PC-3 (cell line): ENCODE measurements at regions of chr7 and their contacts with region 1.

Region 1: DNA sequence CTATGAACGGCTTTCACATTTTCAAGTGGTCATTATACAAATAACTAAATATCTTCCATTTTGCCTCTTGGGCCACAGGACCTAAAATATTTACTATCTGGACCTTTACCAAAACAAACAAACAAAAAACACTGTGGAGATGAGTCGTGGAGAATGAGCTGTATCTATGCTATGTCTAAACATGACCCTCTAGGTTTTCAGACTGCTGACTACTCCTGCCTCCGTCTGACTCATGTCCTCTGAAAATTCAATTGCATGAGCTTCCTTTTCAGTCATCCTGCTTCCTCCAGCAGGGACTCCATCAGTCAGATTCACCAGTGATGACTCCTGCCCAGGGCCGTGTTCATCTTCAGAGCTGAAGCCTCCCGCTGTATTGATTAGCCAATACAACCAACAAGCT is 96.8 kb downstream of the COL28A1 start:
- DNase-seq: peak; percentile 97
- ATAC-seq: peak; percentile 99
- H3K4me3 ChIP-seq: no peak overlapping the region
- H3K27ac ChIP-seq: peak overlapping the region; percentile 74
- H3K4me1 ChIP-seq: peaks cover 38% of the 10 kb centered on the region
- H3K27me3 ChIP-seq: no peaks in the 10 kb centered on the region
- CTCF ChIP-seq: no peak

Region 2: GRCh38 chr7:7452119-7452518 is 13.3 kb after region 1 on chr7:
- CTCF ChIA-PET with region 1: no interaction called
- POLR2A ChIA-PET with region 1: interaction called, 5 read pairs
- intact Hi-C with region 1: loop called (anchors 1 kb)
- DNase-seq: no peak
- ATAC-seq: no peak
- H3K4me3 ChIP-seq: no peak overlapping the region
- H3K27ac ChIP-seq: no peak overlapping the region
- H3K4me1 ChIP-seq: peaks cover 14% of the 10 kb centered on the region
- H3K27me3 ChIP-seq: no peaks in the 10 kb centered on the region
- CTCF ChIP-seq: no peak

Region 3: GRCh38 chr7:7489546-7489945 is 50.7 kb after region 1 on chr7:
- CTCF ChIA-PET with region 1: no interaction called
- POLR2A ChIA-PET with region 1: no interaction called
- intact Hi-C with region 1: loop called (anchors 2 kb)
- DNase-seq: peak; percentile 33
- ATAC-seq: no peak
- H3K4me3 ChIP-seq: no peak overlapping the region
- H3K27ac ChIP-seq: no peak overlapping the region
- H3K4me1 ChIP-seq: peaks cover 25% of the 10 kb centered on the region
- H3K27me3 ChIP-seq: no peaks in the 10 kb centered on the region
- CTCF ChIP-seq: no peak

Region 4: DNA sequence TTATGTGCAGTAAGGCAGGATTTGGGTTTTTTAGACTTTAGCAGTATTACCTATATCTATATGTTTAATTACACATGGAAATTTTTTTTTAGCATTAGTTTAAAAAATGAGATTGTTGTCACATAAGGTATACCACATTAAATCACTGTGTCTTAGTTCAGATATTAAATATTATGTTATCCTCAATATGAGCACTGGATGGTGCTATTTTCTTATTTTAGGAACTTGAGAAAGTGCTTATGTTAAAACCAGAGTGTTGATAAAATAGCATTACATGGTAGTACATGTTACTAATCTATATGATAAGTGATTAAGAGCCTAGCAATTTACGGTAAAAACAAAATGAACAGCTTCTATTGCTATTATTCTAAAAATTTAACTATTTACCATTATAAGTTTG is 156.6 kb after region 1 on chr7:
- CTCF ChIA-PET with region 1: no interaction called
- POLR2A ChIA-PET with region 1: no interaction called
- intact Hi-C with region 1: no loop called
- DNase-seq: peak; percentile 62
- ATAC-seq: peak; percentile 61
- H3K4me3 ChIP-seq: no peak overlapping the region
- H3K27ac ChIP-seq: no peak overlapping the region
- H3K4me1 ChIP-seq: no peaks in the 10 kb centered on the region
- H3K27me3 ChIP-seq: no peaks in the 10 kb centered on the region
- CTCF ChIP-seq: peak; percentile 63